Posterior vena cava (tissue), 2 donors: ENCODE measurements at regions of chr3 and their contacts with region 1.

Region 1: GRCh38 chr3:73624821-73625665 is at the start of gene PDZRN3:
- DNase-seq: peak; percentile 92
- total RNA-seq, gene PDZRN3: 59.5 to 71.9 TPM

Region 2: GRCh38 chr3:73508330-73508954 is 116.6 kb before region 1 on chr3:
- intact Hi-C with region 1: loop called in 1 of 2 experiments (anchors 2 kb)
- DNase-seq: no peak

Region 3: DNA sequence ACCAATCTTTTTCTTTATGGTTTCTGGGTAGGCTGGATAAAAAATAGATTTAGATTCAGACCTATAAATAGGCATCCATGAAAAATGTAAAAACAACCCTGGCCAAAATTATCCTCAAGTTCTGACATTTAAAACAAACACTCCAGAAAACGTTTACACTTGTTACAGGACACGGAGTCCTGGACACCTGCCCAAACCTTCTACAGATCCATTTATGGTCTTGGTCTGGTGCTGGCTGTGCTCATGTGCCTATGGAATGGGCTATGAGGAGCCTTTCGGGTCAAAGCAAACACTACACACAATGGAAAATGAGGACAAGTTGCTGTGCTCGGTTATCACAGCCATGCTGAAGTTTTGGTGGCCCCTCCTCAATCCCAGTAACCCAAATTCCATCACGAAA is 108.4 kb before region 1 on chr3:
- intact Hi-C with region 1: loop called (anchors 2 to 5 kb)
- DNase-seq: no peak

Region 4: DNA sequence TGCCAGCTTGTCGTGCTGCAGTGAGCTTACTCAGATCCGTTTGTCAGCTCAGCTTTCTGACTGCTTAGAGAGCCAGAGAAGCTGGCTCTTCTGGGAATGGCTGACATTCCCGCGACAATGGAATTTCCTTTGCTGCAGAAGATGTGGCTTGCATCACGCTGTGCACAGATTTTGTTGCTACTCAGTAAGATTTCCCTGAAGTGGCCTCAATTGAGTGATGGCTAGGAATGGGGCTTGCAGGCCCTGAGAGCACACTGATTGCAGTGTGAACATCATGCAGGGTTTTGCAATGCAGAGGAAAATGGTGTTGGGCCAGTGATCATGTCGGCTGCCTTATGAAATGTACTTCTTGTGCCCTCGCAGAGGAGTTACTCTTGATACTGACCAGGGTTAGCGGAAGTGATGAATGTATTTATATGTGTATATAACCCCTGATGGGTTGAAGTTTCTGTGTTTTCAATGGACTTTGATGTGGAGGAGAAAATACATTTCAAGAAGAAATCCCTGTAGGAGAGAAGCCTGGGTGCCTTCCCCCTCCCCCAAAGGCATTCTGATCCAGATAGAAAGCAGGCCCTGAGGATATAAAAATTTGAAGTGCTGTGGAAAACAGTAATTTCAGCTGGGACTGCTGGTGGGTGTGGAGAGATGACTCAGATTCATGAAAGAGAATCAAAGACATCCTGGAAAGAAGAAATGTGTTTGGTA is 102.2 kb after region 1 on chr3:
- intact Hi-C with region 1: loop called in 1 of 2 experiments (anchors 1 kb)
- DNase-seq: no peak

Region 5: DNA sequence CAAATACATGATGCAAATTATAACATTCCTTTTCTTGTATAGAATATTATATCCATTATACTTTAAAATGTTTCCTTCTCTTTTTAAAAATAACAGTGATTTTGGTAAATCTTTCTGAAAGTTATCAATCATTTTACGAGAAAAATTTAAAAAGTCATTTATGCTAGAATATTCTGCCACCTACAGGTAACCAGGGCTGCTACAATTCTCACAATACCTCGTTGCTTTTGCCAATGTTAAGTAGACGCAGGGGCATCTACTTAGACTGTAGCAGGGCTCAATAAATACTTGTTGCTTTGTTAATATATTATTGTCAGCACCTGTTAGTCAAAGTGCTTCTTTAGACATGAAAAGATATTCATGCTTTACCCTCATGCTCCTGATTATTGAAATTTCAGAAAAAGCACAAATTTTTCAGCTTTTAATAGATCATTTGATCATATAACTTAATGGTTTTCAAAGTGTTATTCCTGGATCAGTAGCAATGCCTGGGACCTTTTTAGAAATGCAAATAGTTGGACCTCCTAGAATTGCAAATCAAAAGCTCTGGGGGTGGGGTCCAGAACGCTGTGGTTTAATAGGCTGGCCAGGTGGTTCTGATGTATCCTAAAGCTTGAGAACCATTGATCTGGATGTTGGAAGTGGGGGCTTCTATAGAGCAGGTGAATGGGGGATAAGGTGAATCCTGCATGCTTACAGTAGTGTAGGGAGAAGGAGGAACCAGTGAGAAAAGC is 223.3 kb after region 1 on chr3:
- intact Hi-C with region 1: loop called in 1 of 2 experiments (anchors 10 kb)
- DNase-seq: no peak

Region 6: DNA sequence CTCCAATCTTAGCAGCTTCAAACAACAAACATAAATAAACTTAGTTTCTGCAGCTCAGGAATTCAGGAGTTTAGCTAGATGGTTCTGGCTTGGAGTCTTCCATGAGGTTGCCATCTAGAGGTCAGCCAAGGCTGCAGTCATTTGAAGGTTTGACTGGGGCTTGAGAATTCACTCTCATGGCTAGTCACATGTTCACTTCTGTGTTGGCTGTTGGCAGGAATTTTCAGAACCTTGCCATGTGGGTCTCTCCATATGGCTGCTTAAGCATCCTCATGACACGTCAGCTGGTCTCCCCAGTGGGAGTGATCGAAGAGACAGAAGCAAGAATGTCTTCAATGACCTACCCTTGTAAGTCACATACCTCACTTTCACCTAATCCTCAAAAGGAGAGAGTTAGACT is 1258.6 kb after region 1 on chr3:
- intact Hi-C with region 1: no loop called
- DNase-seq: no peak